ENCODE measurements at regions of chr10 and their contacts with region 1.

Region 1: GRCh38 chr10:119542988-119543813 is 682 bp upstream of the RGS10 start:
- DNase-seq: peak; percentile 82
- H3K4me3 ChIP-seq: peak overlapping the region; percentile 63 to 71
- H3K27ac ChIP-seq: no peak overlapping the region
- H3K4me1 ChIP-seq: peaks cover 3 to 17% of the 10 kb centered on the region in 2 experiments; a peak in 3 of 4 replicates
- H3K27me3 ChIP-seq: no peaks in the 10 kb centered on the region; the same call in 1 of the 2 replicates
- CTCF ChIP-seq: peak; percentile 75
- EP300 ChIP-seq: no peak
- RAD21 ChIP-seq: peak; percentile 52

Region 2: GRCh38 chr10:119189811-119190282 is 353.4 kb before region 1 on chr10:
- CTCF ChIA-PET with region 1: interaction called, 10 read pairs
- POLR2A ChIA-PET with region 1: no interaction called
- DNase-seq: no peak
- H3K4me3 ChIP-seq: no peak overlapping the region
- H3K27ac ChIP-seq: peak overlapping the region in 1 of 2 experiments; percentile 53; a peak in 2 of 4 replicates
- H3K4me1 ChIP-seq: peaks cover 0 to 6% of the 10 kb centered on the region in 2 experiments; a peak in 2 of 4 replicates
- H3K27me3 ChIP-seq: no peaks in the 10 kb centered on the region
- CTCF ChIP-seq: no peak
- EP300 ChIP-seq: no peak
- RAD21 ChIP-seq: no peak

Region 3: DNA sequence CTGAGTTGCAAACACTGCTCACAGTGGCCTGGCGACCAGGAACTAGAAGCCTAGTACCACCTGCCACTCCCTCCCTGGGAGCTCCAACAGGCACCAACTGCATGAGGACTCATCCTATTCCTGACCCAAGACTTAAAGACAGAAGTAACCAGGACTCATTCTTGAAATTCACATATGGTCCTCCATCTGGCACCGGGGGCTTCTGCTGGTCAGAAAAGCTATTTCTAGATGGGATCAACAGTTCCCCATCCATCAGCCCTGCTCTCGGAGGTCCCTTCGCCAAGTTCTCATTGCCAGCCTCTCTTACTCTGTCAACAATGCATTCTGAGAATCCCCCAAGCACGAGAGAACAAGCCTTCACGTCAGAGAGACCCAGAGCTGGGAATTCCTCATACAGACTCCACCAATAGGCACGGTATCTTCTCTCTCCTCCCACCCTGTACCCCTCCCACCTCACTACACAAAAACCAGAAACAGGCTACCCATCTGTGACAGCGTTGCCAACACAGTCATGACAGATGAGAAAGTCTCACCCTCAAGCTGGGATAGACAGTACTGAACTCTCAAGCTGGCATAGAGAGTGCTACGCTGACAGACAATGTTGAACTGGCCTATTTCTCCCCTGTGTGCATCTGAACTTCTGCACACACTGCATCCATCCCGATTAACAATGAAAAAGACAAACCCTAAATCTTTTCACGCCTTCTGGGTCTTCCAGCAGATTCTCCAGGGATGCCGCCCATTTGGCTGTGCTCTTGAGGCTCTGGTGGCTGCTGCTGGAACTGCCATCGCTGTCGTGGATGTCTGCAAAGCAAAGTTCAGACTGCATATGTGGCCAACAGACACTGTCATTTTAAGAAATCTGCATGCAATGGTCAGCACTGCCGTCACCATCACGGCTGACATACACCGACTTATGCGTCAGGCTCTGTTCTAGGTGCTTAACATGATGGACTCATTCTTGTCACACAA is 16.3 kb before region 1 on chr10:
- CTCF ChIA-PET with region 1: interaction called, 23 read pairs
- POLR2A ChIA-PET with region 1: no interaction called
- DNase-seq: no peak
- H3K4me3 ChIP-seq: no peak overlapping the region
- H3K27ac ChIP-seq: peak overlapping the region; percentile 11 to 36; a peak in 2 of 4 replicates
- H3K4me1 ChIP-seq: peaks cover 9 to 16% of the 10 kb centered on the region in 2 experiments; a peak in 3 of 4 replicates
- H3K27me3 ChIP-seq: no peaks in the 10 kb centered on the region
- CTCF ChIP-seq: no peak; the same call in 1 of the 2 replicates
- EP300 ChIP-seq: no peak
- RAD21 ChIP-seq: no peak

Measured in SK-N-SH (cell line).